WTC11 (cell line): ENCODE measurements at regions of chr6 and their contacts with region 1.

Region 1: DNA sequence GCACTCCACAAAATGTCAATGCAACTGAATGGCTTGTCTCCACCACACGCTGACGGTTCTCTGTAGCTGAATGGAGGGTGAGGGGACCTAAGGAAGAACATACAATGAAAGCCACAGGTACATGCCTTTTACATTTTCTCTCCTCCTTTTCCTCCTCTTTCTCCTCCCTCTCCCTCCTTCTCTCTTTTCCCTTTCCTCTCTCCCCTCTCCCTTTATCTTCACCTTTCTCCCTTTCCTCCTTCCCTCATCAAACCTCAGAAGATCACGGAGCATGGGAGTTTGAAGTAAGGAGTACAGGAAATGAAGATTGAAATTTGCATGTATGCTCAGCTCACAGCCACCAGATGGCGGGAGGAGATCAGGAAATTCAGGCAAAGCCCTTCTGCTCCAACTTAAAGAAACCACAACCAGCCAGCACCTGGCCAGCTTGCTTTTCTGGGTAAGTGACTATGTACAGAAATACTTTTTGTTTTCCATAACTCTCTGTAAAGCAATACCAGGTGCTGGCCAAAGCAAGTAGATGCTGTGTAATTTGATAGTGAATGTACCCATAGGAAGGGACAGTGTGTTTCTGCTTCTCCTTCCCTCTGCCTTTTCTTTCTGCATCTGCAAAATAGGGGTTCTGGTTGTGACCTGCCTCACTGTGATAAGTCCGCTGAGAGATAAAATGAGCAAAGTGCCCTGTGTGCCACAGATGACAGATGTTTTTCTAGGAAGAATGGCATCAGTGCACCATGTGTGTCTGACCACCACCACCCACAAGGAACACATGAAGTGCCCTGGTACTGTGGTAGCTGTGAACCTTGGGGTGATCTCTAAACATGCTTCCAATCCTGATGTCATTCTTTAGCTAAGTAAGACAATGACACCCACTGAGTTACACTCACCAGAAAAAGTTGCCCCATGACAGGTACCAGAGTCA is 18.6 kb upstream of the FOXO3 start:
- DNase-seq: peak; percentile 72
- ATAC-seq: peak; percentile 76
- H3K4me3 Mint-ChIP-seq: peak overlapping the region; percentile 41
- H3K27ac Mint-ChIP-seq: no peak overlapping the region
- H3K4me1 Mint-ChIP-seq: peaks cover 12% of the 10 kb centered on the region
- H3K27me3 Mint-ChIP-seq: peaks cover 7% of the 10 kb centered on the region
- CTCF ChIP-seq: peak; percentile 73

Region 2: GRCh38 chr6:107645800-107646575 is 896.1 kb before region 1 on chr6:
- CTCF ChIA-PET with region 1: no interaction called
- POLR2A ChIA-PET with region 1: no interaction called
- DNase-seq: no peak
- ATAC-seq: no peak
- H3K4me3 Mint-ChIP-seq: no peak overlapping the region
- H3K27ac Mint-ChIP-seq: no peak overlapping the region
- H3K4me1 Mint-ChIP-seq: no peaks in the 10 kb centered on the region
- H3K27me3 Mint-ChIP-seq: no peaks in the 10 kb centered on the region
- CTCF ChIP-seq: no peak

Region 3: DNA sequence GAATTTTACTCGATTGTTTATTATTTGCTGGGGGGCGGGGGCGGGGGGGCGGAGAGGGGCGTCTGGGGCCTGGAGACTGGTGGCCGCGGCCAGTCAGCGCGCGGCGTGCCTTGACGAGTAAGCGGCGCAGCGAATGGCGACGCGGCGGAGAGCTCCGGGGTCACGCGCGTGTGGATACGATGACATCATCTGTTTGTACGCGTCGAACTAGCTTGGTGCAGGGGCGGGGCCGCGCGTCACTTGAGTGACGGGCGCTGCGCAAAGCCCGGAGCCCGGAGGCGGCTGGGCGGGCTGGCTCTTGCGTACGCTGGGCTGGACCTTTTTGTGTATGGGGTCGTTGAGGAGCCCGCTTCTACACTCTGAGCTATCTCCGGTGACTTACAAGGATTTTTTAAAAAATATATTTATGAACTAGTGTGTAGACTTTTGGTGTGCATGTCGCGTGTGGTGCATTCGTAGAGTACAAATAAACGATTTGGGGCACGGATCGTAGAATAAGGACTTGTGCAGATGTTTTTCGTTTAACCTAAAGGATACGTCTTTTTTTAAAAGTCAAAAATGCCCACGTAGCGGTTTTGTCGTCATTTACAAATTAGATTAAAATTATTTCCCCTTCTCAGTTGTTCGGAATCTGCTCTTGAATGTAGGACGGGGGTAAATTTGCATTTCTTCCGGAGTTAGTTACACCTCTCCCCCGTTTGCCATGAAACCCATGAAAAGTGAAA is 16.4 kb after region 1 on chr6:
- CTCF ChIA-PET with region 1: interaction called, 18 read pairs
- POLR2A ChIA-PET with region 1: interaction called, 4 read pairs
- DNase-seq: peak; percentile 94
- ATAC-seq: peak; percentile 40
- H3K4me3 Mint-ChIP-seq: peak overlapping the region; percentile 93
- H3K27ac Mint-ChIP-seq: peak overlapping the region; percentile 93
- H3K4me1 Mint-ChIP-seq: peaks cover 19% of the 10 kb centered on the region
- H3K27me3 Mint-ChIP-seq: peaks cover 48% of the 10 kb centered on the region
- CTCF ChIP-seq: no peak

Region 4: GRCh38 chr6:108782179-108783041 is 240.3 kb after region 1 on chr6:
- CTCF ChIA-PET with region 1: interaction called, 14 read pairs
- POLR2A ChIA-PET with region 1: interaction called, 3 read pairs
- DNase-seq: peak; percentile 87
- ATAC-seq: peak; percentile 62
- H3K4me3 Mint-ChIP-seq: peak overlapping the region; percentile 80
- H3K27ac Mint-ChIP-seq: no peak overlapping the region
- H3K4me1 Mint-ChIP-seq: peaks cover 41% of the 10 kb centered on the region
- H3K27me3 Mint-ChIP-seq: peaks cover 52% of the 10 kb centered on the region
- CTCF ChIP-seq: peak; percentile 60; the same call in 1 of the 2 replicates

Region 5: DNA sequence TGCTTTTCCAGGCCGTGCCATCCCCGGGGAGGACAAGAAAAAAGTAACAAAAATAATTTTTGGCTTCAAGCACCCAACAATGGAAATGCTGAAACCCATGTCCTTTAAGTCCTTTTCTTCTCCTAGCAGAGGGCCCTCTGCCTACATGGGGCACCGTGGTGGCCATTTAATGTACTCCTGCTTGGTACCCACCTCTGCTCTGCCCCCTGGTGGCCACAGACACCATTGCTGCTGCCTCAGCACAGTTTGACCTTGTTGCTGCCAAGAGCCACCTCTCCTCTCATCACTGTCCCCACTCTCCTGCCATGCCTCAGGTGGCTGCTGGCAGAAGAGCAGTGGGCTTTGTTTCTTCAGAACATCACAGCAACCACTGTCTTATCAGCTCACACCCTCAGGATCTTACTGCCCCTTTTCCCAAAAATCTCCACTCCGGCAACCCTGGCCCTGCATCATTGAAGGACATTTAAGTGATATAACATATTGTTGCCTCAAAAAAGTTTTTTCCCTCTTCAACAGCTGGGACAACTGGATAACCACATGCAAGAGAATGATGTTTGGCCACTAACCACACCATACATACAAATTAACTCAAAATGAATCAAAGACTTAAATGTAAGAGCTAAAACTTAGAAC is 293.2 kb after region 1 on chr6:
- CTCF ChIA-PET with region 1: interaction called, 51 read pairs
- POLR2A ChIA-PET with region 1: no interaction called
- DNase-seq: peak; percentile 89
- ATAC-seq: peak; percentile 64
- H3K4me3 Mint-ChIP-seq: no peak overlapping the region
- H3K27ac Mint-ChIP-seq: no peak overlapping the region
- H3K4me1 Mint-ChIP-seq: peaks cover 26% of the 10 kb centered on the region
- H3K27me3 Mint-ChIP-seq: 0 out of 2 replicates have a peak, but pooled peaks cover 5% of the 10 kb centered on the region
- CTCF ChIP-seq: peak; percentile 99

Region 6: DNA sequence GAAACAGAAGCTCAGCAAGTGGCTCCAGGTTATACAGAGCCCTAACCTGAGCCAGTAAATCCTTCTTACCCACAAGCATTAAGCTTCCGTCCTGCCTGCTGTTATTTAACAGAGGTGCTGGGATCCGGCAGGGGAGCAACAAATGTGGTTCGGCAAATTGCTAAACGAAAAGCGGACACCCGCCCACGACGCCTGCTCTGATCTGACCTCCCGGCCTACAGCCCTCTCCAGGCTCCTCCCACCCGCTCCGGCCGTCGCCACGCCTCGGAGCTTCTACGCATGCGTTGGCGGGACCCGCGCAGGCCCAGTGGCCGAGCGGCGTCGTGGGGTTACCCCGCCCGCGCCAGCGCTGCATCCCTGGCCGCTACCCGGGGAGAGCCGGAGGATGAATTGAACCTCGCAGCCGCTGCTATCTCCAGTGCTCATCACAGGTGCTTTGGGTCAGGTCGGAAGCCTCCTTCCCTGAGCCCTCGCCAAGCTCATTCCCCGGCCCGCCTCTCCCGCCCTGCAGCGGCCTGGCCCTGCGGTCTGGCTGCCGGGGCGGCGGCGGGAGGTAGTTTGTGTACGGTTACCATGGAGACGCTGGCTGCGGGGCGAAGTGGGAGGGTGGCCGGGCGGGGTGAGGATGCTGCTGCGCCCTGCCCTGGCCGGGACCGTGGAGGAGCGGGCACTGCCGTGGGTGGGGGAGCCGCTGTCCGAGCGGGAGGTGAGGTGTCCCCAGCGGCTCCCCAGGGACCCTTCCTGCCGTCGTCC is 306.2 kb after region 1 on chr6 and contains the start of gene ARMC2:
- CTCF ChIA-PET with region 1: interaction called, 10 read pairs
- POLR2A ChIA-PET with region 1: no interaction called
- DNase-seq: peak; percentile 96
- ATAC-seq: peak; percentile 97
- H3K4me3 Mint-ChIP-seq: peak within 1 kb of the TSS; percentile 76
- H3K27ac Mint-ChIP-seq: peak within 1 kb of the TSS; percentile 32; the same call in 1 of the 2 replicates
- H3K4me1 Mint-ChIP-seq: peaks cover 13% of the 10 kb centered on the region
- H3K27me3 Mint-ChIP-seq: no peaks in the 10 kb centered on the region
- CTCF ChIP-seq: no peak
- total RNA-seq, gene ARMC2: 4.6 to 5.2 TPM (median 4.7 TPM) in 3 replicates

Region 7: GRCh38 chr6:109073344-109074132 is 531.4 kb after region 1 on chr6:
- CTCF ChIA-PET with region 1: interaction called, 26 read pairs
- POLR2A ChIA-PET with region 1: no interaction called
- DNase-seq: no peak
- ATAC-seq: peak; percentile 48
- H3K4me3 Mint-ChIP-seq: no peak overlapping the region
- H3K27ac Mint-ChIP-seq: no peak overlapping the region
- H3K4me1 Mint-ChIP-seq: peaks cover 4% of the 10 kb centered on the region
- H3K27me3 Mint-ChIP-seq: no peaks in the 10 kb centered on the region
- CTCF ChIP-seq: peak; percentile 52